Activated CD8-positive, alpha-beta memory T cell treated with anti-CD3 and anti-CD28 coated beads, Interleukin-2, amount 10 ng/mL, durations not matched to agents 7 days and 5 days (primary cell): ENCODE measurements at regions of chr15 and their contacts with region 1.

Region 1: DNA sequence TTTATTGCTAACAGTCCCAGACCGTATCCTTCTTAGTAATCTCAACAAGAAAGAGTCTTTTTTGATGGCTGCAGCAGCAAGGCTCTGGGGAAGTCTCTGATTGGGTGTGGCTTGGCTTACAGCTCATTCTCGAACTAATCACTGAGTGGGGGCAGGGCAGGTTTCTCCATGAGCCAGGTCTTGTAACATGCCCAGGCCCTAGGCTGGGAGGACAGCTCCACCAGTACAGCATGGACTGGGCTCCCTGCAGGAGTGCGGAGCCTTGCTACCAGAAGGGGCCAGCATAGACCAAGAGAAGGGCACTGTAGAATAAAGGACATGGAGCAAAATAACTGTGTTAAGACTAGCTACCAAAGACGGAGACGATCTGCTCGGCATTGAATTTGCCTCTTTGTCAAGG is 7.2 kb downstream of the CD276 start:
- DNase-seq: no peak
- ATAC-seq: no peak
- H3K4me3 Mint-ChIP-seq: no peak overlapping the region
- H3K27ac Mint-ChIP-seq: no peak overlapping the region
- H3K4me1 Mint-ChIP-seq: peaks cover 23% of the 10 kb centered on the region
- H3K27me3 Mint-ChIP-seq: peaks cover 69% of the 10 kb centered on the region

Region 2: DNA sequence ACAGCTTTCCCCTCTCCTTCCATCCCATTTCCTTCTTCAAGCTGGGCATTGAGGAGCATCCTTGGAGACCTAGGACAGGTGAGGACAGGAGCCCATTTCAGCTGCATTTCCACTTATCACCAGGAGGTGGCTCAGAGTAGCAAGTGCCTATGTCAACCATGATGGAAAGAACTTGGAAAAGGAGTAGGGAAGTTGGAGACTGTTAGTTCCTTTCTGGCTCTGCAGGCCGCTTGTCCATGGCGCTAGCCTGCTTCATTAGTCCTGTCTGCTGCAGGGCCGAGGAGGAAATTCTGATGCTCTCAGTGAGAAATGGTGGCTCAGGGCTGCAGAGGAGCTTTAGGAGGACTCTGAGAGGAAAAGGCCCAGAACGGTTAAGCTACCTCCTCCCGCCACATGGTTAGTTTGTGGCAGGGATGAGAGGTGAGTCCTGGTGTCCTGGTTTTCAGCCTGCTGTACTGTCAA is 14.2 kb before region 1 on chr15:
- CTCF ChIA-PET with region 1: interaction called, 137 read pairs
- DNase-seq: peak; percentile 56
- ATAC-seq: peak; percentile 61
- H3K4me3 Mint-ChIP-seq: no peak overlapping the region
- H3K27ac Mint-ChIP-seq: no peak overlapping the region
- H3K4me1 Mint-ChIP-seq: peaks cover 28% of the 10 kb centered on the region
- H3K27me3 Mint-ChIP-seq: peaks cover 51% of the 10 kb centered on the region

Region 3: DNA sequence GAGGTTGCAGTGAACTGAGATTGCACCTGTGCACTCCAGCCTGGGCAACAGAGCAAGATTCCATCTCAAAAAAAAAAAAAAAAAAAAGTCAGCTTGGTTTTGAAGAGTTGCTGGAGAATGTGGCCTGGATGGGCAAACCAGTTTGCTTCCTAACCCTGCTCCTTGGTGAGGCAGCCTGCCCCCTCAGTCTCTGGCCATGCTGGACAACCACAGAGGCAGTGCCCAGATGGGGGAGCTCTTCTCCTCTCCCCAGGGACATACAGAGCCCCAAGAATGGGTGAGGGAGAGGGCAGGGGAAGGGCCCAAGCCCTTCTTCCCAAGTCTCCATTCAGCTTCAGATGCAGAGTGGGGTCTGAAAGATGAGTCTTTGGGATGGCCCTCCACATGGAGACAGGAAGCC is 20.7 kb after region 1 on chr15:
- CTCF ChIA-PET with region 1: no interaction called
- DNase-seq: no peak
- ATAC-seq: no peak
- H3K4me3 Mint-ChIP-seq: no peak overlapping the region
- H3K27ac Mint-ChIP-seq: no peak overlapping the region
- H3K4me1 Mint-ChIP-seq: no peaks in the 10 kb centered on the region
- H3K27me3 Mint-ChIP-seq: peaks cover 11% of the 10 kb centered on the region

Region 4: GRCh38 chr15:73781038-73781925 is 89.9 kb after region 1 on chr15:
- CTCF ChIA-PET with region 1: no interaction called
- DNase-seq: no peak
- ATAC-seq: no peak
- H3K4me3 Mint-ChIP-seq: no peak overlapping the region
- H3K27ac Mint-ChIP-seq: no peak overlapping the region
- H3K4me1 Mint-ChIP-seq: no peaks in the 10 kb centered on the region
- H3K27me3 Mint-ChIP-seq: peaks cover 2% of the 10 kb centered on the region